ENCODE measurements at regions of chr15 and their contacts with region 1.

Region 1: DNA sequence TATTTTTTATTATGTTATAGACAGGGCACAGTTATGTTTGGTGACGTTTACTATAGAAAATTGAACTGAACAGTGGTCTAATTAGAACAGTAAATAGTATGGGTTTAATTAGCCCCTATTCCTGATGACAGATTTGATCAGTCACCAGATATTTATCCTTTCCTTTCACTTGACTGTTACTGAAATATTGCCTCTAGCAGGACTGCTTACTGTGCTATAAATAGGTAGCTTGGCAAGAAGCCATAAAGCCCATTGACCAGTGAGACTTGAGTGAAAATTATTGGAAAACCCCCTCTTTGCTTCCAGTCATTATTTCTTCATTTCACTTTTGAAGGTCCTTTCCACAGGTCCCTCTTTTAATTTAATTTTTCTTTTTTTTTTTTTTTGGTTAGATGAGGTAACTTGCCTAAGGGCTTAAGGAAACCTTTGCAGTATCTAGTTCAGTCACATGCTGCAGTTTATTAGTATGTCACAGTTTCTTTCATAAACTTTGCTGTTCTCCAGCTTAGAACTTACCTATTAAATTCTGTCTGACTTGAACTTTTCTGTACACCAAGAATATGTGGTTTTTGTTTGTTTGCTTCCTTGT is 115.6 kb downstream of the ADAMTSL3 start:
- DNase-seq: no peak
- ATAC-seq: no peak
- H3K4me3 ChIP-seq: no peak overlapping the region
- H3K27ac ChIP-seq: no peak overlapping the region
- H3K4me1 ChIP-seq: 0 out of 2 replicates have a peak, but pooled peaks cover 3% of the 10 kb centered on the region
- H3K27me3 ChIP-seq: no peaks in the 10 kb centered on the region
- CTCF ChIP-seq: no peak

Region 2: GRCh38 chr15:82768428-82769081 is 1001.0 kb before region 1 on chr15:
- CTCF ChIA-PET with region 1: no interaction called
- POLR2A ChIA-PET with region 1: interaction called, 13 read pairs
- intact Hi-C with region 1: no loop called
- DNase-seq: peak; percentile 45
- ATAC-seq: peak; percentile 90
- H3K4me3 ChIP-seq: no peak overlapping the region
- H3K27ac ChIP-seq: no peak overlapping the region
- H3K4me1 ChIP-seq: peaks cover 9% of the 10 kb centered on the region
- H3K27me3 ChIP-seq: no peaks in the 10 kb centered on the region
- CTCF ChIP-seq: no peak

Region 3: DNA sequence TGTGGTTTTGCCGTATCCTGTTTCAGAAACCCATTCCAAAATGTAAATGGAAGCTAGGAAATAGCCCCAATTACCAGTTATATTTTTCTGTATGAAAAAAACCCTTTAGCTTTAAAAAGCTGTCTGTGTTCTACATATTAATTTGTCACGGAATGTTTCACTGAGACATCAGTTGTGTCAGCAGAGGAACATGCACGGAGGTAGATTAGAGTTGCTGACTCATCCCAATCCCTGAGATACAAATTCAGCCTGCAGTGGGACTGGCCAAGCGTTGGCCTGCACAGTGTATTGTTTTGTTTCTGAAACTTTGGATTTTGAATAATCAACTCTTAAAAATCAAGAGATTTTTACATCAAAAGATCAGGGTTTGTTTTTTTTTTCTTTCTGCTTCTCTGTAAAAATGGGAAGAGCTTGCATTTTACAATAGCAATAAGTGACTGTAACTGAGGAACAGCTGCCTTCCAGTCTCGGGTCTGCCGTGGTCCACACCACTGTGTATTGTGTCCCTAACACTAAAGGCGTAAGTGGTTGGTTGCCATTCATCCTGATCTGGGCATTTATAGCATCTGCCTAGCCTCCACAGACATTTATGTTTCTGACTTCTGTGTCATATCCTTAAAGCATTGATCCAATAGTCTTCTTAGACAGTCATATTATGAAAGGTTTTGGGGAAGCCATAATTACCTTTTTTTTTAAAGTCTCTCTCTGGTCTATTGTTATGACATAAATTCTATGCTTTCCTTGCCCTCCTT is 102.5 kb after region 1 on chr15:
- CTCF ChIA-PET with region 1: no interaction called
- POLR2A ChIA-PET with region 1: no interaction called
- intact Hi-C with region 1: no loop called
- DNase-seq: peak; percentile 62
- ATAC-seq: peak; percentile 71
- H3K4me3 ChIP-seq: no peak overlapping the region
- H3K27ac ChIP-seq: peak overlapping the region; percentile 42
- H3K4me1 ChIP-seq: peaks cover 11% of the 10 kb centered on the region
- H3K27me3 ChIP-seq: no peaks in the 10 kb centered on the region
- CTCF ChIP-seq: no peak